ENCODE measurements at regions of chr2 and their contacts with region 1.

Region 1: DNA sequence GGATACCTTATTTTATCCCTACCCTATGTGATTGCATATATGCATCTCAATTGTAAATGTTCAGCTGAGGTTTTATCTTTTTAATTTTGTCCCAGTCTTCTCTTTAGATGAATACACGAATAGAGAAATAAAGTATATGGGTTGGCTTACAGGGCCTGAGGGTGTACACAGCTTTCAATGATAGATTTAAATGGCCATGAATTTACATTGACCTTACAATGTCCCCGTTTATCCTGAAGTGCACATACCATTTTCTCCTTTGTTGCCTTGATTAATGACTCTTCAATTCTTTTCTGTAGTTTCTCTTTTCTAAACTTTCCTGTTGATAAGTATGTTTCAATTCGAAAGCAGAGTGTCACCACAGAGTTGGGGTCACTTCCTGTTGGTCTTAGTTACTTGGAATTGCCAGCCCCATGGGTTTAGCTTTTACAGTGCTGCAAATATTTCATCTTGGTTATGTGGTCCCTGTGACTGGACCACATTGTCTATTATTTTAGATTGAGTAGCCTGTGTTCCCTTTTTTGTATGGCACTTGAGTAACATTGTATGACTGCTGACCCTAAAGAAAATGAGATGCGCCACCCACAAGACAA is 1616.3 kb upstream of the ACVR2A start:
- DNase-seq: peak; percentile 37
- ATAC-seq: peak; percentile 90
- H3K4me3 ChIP-seq: no peak overlapping the region
- H3K27ac ChIP-seq: no peak overlapping the region
- H3K4me1 ChIP-seq: no peaks in the 10 kb centered on the region
- H3K27me3 ChIP-seq: no peaks in the 10 kb centered on the region
- CTCF ChIP-seq: no peak
- EP300 ChIP-seq: peak; percentile 79 to 90
- POLR2A ChIP-seq: no peak
- RAD21 ChIP-seq: no peak

Region 2: DNA sequence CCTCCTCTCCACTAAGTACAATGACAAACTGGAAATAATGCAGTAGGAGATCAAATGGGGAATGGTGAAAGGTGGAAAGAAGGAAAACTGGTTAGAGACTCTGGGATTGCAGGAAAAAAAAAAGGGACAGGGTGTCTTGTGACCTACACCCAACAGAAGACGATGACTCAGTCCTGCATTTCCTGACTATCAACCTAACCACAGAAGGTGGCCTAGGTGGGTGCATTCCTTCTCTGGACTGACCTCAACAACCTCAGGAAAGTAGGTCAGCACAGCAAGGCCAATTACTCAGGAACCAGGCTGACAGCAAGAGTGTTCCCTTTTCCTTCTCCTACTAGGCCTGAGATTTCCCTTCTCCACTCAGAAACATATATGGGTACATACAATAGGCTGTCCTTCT is 322.2 kb before region 1 on chr2:
- CTCF ChIA-PET with region 1: no interaction called
- POLR2A ChIA-PET with region 1: no interaction called
- RAD21 ChIA-PET with region 1: no interaction called
- SMC1A ChIA-PET with region 1: no interaction called
- in situ Hi-C with region 1: no loop called
- intact Hi-C with region 1: loop called (anchors 5 kb)
- DNase-seq: no peak
- ATAC-seq: no peak
- H3K4me3 ChIP-seq: no peak overlapping the region
- H3K27ac ChIP-seq: no peak overlapping the region
- H3K4me1 ChIP-seq: no peaks in the 10 kb centered on the region
- H3K27me3 ChIP-seq: no peaks in the 10 kb centered on the region
- CTCF ChIP-seq: no peak
- EP300 ChIP-seq: no peak
- POLR2A ChIP-seq: no peak
- RAD21 ChIP-seq: no peak

Region 3: GRCh38 chr2:146119586-146119985 is 109.0 kb before region 1 on chr2:
- CTCF ChIA-PET with region 1: no interaction called
- POLR2A ChIA-PET with region 1: no interaction called
- RAD21 ChIA-PET with region 1: no interaction called
- SMC1A ChIA-PET with region 1: no interaction called
- in situ Hi-C with region 1: no loop called
- intact Hi-C with region 1: no loop called
- DNase-seq: no peak
- ATAC-seq: no peak
- H3K4me3 ChIP-seq: no peak overlapping the region
- H3K27ac ChIP-seq: no peak overlapping the region
- H3K4me1 ChIP-seq: no peaks in the 10 kb centered on the region
- H3K27me3 ChIP-seq: no peaks in the 10 kb centered on the region
- CTCF ChIP-seq: no peak
- EP300 ChIP-seq: no peak
- POLR2A ChIP-seq: no peak
- RAD21 ChIP-seq: no peak

Region 4: GRCh38 chr2:146209842-146210275 is 18.7 kb before region 1 on chr2:
- CTCF ChIA-PET with region 1: interaction called, 5 read pairs
- POLR2A ChIA-PET with region 1: interaction called, 3 read pairs
- RAD21 ChIA-PET with region 1: no interaction called
- SMC1A ChIA-PET with region 1: interaction called, 12 read pairs
- in situ Hi-C with region 1: no loop called
- intact Hi-C with region 1: loop called (anchors 1 kb)
- DNase-seq: peak; percentile 20
- ATAC-seq: peak; percentile 96
- H3K4me3 ChIP-seq: no peak overlapping the region
- H3K27ac ChIP-seq: no peak overlapping the region
- H3K4me1 ChIP-seq: no peaks in the 10 kb centered on the region
- H3K27me3 ChIP-seq: no peaks in the 10 kb centered on the region
- CTCF ChIP-seq: no peak
- EP300 ChIP-seq: peak; percentile 83 to 98
- POLR2A ChIP-seq: no peak
- RAD21 ChIP-seq: no peak

Region 5: GRCh38 chr2:146262606-146263005 is 34.0 kb after region 1 on chr2:
- CTCF ChIA-PET with region 1: no interaction called
- POLR2A ChIA-PET with region 1: no interaction called
- RAD21 ChIA-PET with region 1: no interaction called
- SMC1A ChIA-PET with region 1: no interaction called
- in situ Hi-C with region 1: no loop called
- intact Hi-C with region 1: no loop called
- DNase-seq: no peak
- ATAC-seq: no peak
- H3K4me3 ChIP-seq: no peak overlapping the region
- H3K27ac ChIP-seq: no peak overlapping the region
- H3K4me1 ChIP-seq: no peaks in the 10 kb centered on the region
- H3K27me3 ChIP-seq: no peaks in the 10 kb centered on the region
- CTCF ChIP-seq: no peak
- EP300 ChIP-seq: no peak
- POLR2A ChIP-seq: no peak
- RAD21 ChIP-seq: no peak

Region 6: DNA sequence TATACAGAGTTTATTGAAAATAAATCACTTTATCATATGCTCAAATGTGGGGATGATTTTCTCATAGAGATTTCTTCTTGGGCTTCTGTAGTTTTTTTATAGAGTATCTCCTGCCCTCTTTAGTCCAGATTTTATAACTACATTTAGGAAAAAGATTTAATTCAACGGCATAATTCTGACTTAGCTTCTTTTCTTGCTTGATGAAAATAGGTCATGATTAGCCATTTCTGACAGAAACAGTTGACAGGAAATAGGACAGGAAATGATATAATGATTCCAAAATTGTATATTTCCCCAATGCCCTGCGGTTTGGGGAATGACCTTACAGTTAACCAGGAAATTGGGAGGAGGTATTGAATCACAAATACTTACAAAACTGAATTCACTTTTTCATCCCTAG is 84.3 kb after region 1 on chr2:
- CTCF ChIA-PET with region 1: no interaction called
- POLR2A ChIA-PET with region 1: no interaction called
- RAD21 ChIA-PET with region 1: no interaction called
- SMC1A ChIA-PET with region 1: no interaction called
- in situ Hi-C with region 1: no loop called
- intact Hi-C with region 1: loop called (anchors 5 kb)
- DNase-seq: no peak
- ATAC-seq: peak; percentile 45; the same call in 2 of the 3 replicates
- H3K4me3 ChIP-seq: no peak overlapping the region
- H3K27ac ChIP-seq: no peak overlapping the region
- H3K4me1 ChIP-seq: no peaks in the 10 kb centered on the region
- H3K27me3 ChIP-seq: no peaks in the 10 kb centered on the region
- CTCF ChIP-seq: no peak; a peak in 1 of 6 replicates
- EP300 ChIP-seq: no peak
- POLR2A ChIP-seq: no peak
- RAD21 ChIP-seq: peak; percentile 30; the same call in 1 of the 2 replicates